ENCODE measurements at regions of chr6 and their contacts with region 1.

Region 1: GRCh38 chr6:32971581-32972352 is 3.4 kb downstream of the BRD2 start:
- DNase-seq: peak; percentile 100
- H3K4me3 Mint-ChIP-seq: peak overlapping the region; percentile 90
- H3K27ac Mint-ChIP-seq: peak overlapping the region; percentile 99
- H3K4me1 Mint-ChIP-seq: peaks cover 38% of the 10 kb centered on the region
- H3K27me3 Mint-ChIP-seq: no peaks in the 10 kb centered on the region
- CTCF ChIP-seq: no peak

Region 2: GRCh38 chr6:32177788-32178546 is 793.8 kb before region 1 on chr6 and contains the start of gene RNF5:
- CTCF ChIA-PET with region 1: no interaction called
- POLR2A ChIA-PET with region 1: interaction called, 27 read pairs
- intact Hi-C with region 1: no loop called
- DNase-seq: peak; percentile 100
- H3K4me3 Mint-ChIP-seq: peak within 1 kb of the TSS; percentile 79
- H3K27ac Mint-ChIP-seq: peak within 1 kb of the TSS; percentile 91
- H3K4me1 Mint-ChIP-seq: peaks cover 55% of the 10 kb centered on the region
- H3K27me3 Mint-ChIP-seq: no peaks in the 10 kb centered on the region
- CTCF ChIP-seq: no peak
- total RNA-seq, gene RNF5: 28.1 and 29.6 TPM in 2 replicates

Region 3: DNA sequence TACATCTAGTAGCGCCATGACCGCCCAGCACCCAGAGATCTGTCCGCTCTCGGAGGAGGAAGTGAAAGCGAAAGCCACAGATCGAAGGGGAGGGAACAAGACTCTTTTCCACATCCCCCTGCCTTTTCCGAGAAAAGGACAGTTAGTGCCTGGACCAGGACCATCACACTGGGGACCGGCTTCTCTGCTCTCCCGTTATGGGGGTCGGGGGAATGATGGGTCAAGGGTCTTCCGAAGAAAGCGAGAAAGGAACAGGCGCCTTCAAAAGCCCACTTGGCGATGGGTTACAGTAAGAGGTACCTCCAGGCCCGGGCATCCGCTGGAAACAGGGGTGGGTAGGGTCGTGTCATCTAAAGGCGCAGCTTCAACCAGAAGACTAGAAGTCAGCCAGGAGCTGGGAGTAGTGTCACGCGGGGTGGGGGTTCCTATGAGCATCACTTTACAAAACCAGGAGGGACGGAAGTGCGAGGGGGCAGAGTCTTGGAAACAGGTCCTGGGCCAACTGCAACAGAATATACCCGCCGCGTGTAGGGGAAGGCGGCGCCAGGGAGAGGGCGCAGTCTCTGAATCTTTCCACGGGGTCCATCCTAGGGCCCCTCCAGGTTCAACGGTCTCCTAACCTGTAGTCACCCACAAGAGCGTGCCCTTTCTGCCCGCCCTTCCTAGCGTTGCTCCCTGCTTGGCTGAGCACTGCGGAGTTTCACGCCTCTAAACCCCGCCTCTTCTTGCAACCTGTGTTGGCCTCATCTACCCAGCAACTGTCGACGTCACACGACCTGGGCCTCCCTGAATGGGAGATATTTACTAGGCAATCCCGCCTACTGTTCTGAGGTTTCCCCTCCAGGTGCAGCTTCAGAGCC is 127.6 kb before region 1 on chr6 and contains the start of gene PSMB8:
- CTCF ChIA-PET with region 1: interaction called, 5 read pairs
- POLR2A ChIA-PET with region 1: interaction called, 26 read pairs
- intact Hi-C with region 1: loop called (anchors 5 kb)
- DNase-seq: peak; percentile 98
- H3K4me3 Mint-ChIP-seq: peak within 1 kb of the TSS; percentile 99
- H3K27ac Mint-ChIP-seq: peak within 1 kb of the TSS; percentile 96
- H3K4me1 Mint-ChIP-seq: peaks cover 30% of the 10 kb centered on the region
- H3K27me3 Mint-ChIP-seq: no peaks in the 10 kb centered on the region
- CTCF ChIP-seq: no peak
- total RNA-seq, gene PSMB8: 34.1 and 47.3 TPM in 2 replicates

Region 4: GRCh38 chr6:32933636-32934085 is 38.1 kb before region 1 on chr6:
- CTCF ChIA-PET with region 1: interaction called, 31 read pairs
- POLR2A ChIA-PET with region 1: interaction called, 27 read pairs
- intact Hi-C with region 1: loop called (anchors 1 kb)
- DNase-seq: peak; percentile 82
- H3K4me3 Mint-ChIP-seq: no peak overlapping the region
- H3K27ac Mint-ChIP-seq: no peak overlapping the region
- H3K4me1 Mint-ChIP-seq: no peaks in the 10 kb centered on the region
- H3K27me3 Mint-ChIP-seq: peaks cover 85% of the 10 kb centered on the region
- CTCF ChIP-seq: peak; percentile 66

Region 5: GRCh38 chr6:32952817-32953739 is 18.7 kb before region 1 on chr6 and contains the start of gene HLA-DMA:
- CTCF ChIA-PET with region 1: interaction called, 55 read pairs
- POLR2A ChIA-PET with region 1: interaction called, 130 read pairs
- intact Hi-C with region 1: no loop called
- DNase-seq: peak; percentile 89
- H3K4me3 Mint-ChIP-seq: no peak within 1 kb of the TSS
- H3K27ac Mint-ChIP-seq: no peak within 1 kb of the TSS
- H3K4me1 Mint-ChIP-seq: no peaks in the 10 kb centered on the region
- H3K27me3 Mint-ChIP-seq: no peaks in the 10 kb centered on the region
- CTCF ChIP-seq: peak; percentile 45
- total RNA-seq, gene HLA-DMA: 2.4 and 2.9 TPM in 2 replicates

Region 6: DNA sequence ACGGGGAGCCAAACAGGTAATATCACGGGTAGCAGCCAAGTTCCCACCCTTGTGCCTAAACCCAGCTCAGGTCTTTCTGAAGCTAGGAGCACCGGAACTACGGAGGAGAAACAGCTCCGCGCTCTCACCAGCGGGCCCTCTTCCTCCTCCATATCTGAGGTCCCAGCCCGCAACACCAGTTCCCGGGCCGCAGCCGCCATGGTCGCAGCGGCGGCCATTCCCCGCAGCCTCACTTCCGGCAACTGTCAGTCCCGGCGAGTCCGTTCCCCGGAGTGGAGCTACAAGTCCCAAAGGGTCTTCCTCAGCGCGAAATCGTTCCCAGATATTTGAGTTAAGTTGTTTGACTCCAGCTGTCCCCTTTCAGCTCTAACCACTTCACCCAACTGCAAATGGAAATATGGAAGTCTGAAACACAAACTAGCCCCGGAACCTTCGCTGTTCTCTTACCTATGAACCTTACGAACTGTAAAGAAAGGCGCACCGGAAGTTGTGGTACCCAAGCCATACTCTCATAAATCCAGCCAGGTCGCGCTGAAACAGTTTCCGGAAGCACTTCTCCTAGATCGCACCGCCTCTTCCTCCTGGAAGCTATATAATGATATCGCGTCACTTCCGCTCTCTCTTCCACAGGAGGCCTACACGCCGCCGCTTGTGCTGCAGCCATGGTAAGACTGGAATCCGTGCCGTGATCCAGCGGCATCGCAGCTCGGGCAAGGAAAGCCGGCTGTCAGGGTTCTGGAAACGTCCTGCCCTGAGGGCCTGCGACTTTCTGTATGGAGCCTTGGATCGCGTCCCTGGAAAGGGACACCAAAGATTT is 299.9 kb after region 1 on chr6 and contains the starts of genes RPS18 and VPS52:
- CTCF ChIA-PET with region 1: no interaction called
- POLR2A ChIA-PET with region 1: interaction called, 67 read pairs
- intact Hi-C with region 1: no loop called
- DNase-seq: peak; percentile 99
- H3K4me3 Mint-ChIP-seq: peak within 1 kb of the TSS; percentile 99
- H3K27ac Mint-ChIP-seq: peak within 1 kb of the TSS; percentile 100
- H3K4me1 Mint-ChIP-seq: peaks cover 34% of the 10 kb centered on the region
- H3K27me3 Mint-ChIP-seq: no peaks in the 10 kb centered on the region
- CTCF ChIP-seq: no peak
- total RNA-seq, gene RPS18: 4,063 and 4,680 TPM in 2 replicates
- total RNA-seq, gene VPS52: 47.8 and 49.7 TPM in 2 replicates

Region 7: GRCh38 chr6:33324125-33324524 is 352.4 kb after region 1 on chr6:
- CTCF ChIA-PET with region 1: no interaction called
- POLR2A ChIA-PET with region 1: no interaction called
- intact Hi-C with region 1: no loop called
- DNase-seq: no peak
- H3K4me3 Mint-ChIP-seq: peak overlapping the region; percentile 81
- H3K27ac Mint-ChIP-seq: no peak overlapping the region
- H3K4me1 Mint-ChIP-seq: peaks cover 46% of the 10 kb centered on the region
- H3K27me3 Mint-ChIP-seq: no peaks in the 10 kb centered on the region
- CTCF ChIP-seq: no peak

Measured in MCF 10A (cell line).